Psoas muscle (tissue), 8 donors: ENCODE measurements at regions of chr17 and their contacts with region 1.

Region 1: GRCh38 chr17:49694847-49695683 is 12.7 kb downstream of the SLC35B1 start:
- DNase-seq: peak; percentile 48 to 64
- ATAC-seq: peak; percentile 42 to 48 (median 45)
- H3K4me3 ChIP-seq: no peak overlapping the region
- H3K27ac ChIP-seq: no peak overlapping the region
- H3K4me1 ChIP-seq: peaks cover 8% of the 10 kb centered on the region
- H3K27me3 ChIP-seq: no peaks in the 10 kb centered on the region
- CTCF ChIP-seq: peak; percentile 89

Region 2: DNA sequence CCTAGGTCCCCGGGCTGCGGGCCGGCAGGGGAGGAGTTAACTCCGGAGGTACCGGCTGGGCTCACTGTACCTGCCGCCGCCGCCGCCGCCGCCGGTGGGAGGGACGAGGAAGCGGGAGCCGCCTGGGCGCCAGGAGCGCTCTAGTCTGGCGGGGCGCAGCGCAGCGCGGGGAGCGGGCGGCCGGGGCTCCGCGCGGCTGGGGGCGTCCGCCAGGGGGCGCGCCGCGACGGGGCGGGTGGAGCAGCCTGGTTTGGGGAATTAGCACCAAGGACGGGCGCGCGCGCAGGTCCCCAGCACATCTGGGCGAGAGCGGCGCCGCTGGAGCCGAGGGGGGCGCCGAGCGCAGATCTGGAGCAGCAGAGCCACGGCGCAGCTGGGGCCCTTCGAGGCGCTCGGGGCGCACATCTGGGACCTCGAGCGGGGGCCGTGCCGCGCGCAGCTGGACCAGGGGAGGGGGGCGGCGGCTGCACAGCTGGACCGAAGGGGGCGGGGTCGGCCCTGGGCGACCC is 119.4 kb before region 1 on chr17 and contains the start of gene NXPH3:
- intact Hi-C with region 1: loop called in 1 of 2 experiments (anchors 2 kb)
- DNase-seq: peak; percentile 75 to 84
- ATAC-seq: peak; percentile 71 to 80 (median 77)
- H3K4me3 ChIP-seq: peak within 1 kb of the TSS; percentile 65
- H3K27ac ChIP-seq: no peak within 1 kb of the TSS
- H3K4me1 ChIP-seq: no peaks in the 10 kb centered on the region
- H3K27me3 ChIP-seq: peaks cover 0 to 6% (median 0%) of the 10 kb centered on the region in 3 donors
- CTCF ChIP-seq: peak; percentile 79
- total RNA-seq, gene NXPH3: 0.42 to 1.8 (median 0.61) TPM